Activated T-helper 1 cell treated with anti-CD3 and anti-CD28 coated beads, Interleukin-12 subunit alpha, Interleukin-12 subunit beta, Interleukin-2, Interleukin-4 antibody, amounts not matched to agents 30 ng/mL and 10 ng/mL and 1 ng/mL, durations not matched to agents 14 hours and 24 hours and 36 hours (primary cell): ENCODE measurements at regions of chr18 and their contacts with region 1.

Region 1: DNA sequence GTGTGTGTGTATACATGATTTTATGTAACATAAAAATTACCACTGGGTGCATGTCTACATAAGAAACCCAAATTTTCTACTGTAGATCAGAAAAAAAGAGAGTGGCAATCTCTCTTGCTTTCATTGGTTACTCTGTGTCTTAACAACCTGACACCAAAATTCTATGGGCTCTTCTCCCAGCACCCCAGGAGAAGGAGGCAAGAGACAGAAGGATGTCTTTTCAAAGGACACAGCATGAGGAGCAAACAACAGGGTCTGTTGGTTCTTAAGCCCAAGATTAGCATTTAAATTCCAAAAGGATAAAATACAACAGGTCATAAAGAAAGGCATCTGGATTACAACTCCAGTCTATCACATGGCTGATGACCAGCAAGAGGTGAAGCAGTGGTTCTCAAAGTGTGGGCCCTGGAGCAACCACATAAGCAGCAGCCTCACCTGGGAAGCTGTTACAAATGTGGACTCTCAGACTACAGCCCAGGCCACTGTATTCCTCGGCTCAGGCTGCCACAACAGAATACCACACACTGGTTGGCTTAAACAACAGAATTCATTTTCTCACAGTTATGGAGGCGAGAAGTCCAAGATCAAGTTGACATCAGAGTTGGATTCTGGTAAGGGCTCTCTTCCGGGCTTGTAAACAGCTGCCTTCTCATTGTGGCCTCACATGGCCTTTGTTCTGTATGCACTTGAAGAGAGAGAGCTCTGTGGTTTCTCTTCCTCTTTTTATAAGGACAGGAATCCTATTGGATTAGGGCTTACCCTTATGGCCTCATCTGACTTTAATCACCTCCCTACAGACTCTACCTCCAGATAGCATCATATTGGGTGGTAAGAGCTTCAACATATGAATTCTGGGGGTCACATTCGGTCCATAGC is 79.8 kb upstream of the RNF152 start:
- DNase-seq: no peak
- H3K4me3 Mint-ChIP-seq: no peak overlapping the region
- H3K27ac Mint-ChIP-seq: peak overlapping the region; percentile 27
- H3K4me1 Mint-ChIP-seq: peaks cover 36% of the 10 kb centered on the region
- H3K27me3 Mint-ChIP-seq: peaks cover 2% of the 10 kb centered on the region

Region 2: GRCh38 chr18:61991201-61991600 is 18.6 kb after region 1 on chr18:
- intact Hi-C with region 1: loop called (anchors 2 kb)
- DNase-seq: no peak
- H3K4me3 Mint-ChIP-seq: no peak overlapping the region
- H3K27ac Mint-ChIP-seq: no peak overlapping the region
- H3K4me1 Mint-ChIP-seq: peaks cover 8% of the 10 kb centered on the region
- H3K27me3 Mint-ChIP-seq: peaks cover 3% of the 10 kb centered on the region

Region 3: DNA sequence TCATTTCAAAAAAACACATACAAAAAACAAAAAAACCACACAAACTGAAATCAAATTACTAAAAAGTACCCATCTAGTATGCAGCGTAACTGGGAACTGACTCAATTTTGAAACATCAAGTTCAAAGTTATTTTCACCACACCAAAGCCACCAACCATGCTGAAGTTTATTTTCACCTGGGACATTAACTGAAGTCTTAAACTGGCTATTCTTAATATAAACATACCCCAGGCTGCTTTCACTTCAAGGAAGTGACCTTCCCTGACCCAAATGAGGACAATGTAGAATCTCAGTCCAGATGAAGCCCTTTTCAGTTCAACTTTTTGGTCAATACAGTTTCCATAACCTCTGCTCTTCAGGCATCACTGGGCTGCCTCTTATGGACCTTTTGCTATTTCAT is 129.6 kb after region 1 on chr18:
- intact Hi-C with region 1: loop called (anchors 10 kb)
- DNase-seq: no peak
- H3K4me3 Mint-ChIP-seq: no peak overlapping the region
- H3K27ac Mint-ChIP-seq: no peak overlapping the region
- H3K4me1 Mint-ChIP-seq: peaks cover 13% of the 10 kb centered on the region
- H3K27me3 Mint-ChIP-seq: no peaks in the 10 kb centered on the region